Cardiac septum (tissue), 1 donor: ENCODE measurements at regions of chr2 and their contacts with region 1.

Region 1: DNA sequence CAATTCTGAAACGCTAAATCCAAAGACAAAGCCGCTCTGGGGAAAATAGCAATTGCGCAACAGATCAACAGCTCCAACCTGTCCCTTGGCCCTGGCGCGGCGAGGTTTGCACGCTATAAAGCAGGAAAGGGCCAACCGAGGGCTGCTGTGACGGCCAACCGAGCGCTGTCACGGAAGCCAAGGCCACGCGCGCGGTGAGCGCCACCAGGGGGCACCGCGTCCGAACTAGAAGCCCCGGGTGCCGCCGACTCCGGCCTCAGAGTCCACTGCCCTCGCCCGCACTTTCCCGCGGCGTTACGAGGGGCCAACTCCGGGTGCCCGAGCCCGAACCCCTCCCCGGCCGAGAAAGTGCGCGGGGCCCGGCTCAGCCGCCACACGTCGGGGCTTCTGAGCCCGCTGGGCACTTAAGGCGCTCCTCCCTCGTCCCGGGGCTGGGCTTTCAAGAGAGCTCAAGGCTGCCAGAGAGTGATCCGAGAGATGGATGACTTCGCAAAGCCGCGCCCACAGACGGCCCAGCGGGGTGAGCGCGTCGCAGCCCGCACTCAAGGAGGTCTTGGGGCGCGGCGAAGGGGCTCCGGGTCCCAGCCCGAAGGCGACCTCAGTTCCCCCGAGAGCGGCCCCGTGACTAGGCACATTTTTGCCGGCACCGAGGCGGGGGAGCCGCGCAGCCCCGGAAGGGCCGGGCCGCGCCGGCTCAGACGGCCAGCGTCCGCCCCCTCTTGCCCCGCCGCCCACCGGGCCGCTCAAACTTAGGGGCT is 897 bp downstream of the NFE2L2 start:
- DNase-seq: peak; percentile 99

Region 2: DNA sequence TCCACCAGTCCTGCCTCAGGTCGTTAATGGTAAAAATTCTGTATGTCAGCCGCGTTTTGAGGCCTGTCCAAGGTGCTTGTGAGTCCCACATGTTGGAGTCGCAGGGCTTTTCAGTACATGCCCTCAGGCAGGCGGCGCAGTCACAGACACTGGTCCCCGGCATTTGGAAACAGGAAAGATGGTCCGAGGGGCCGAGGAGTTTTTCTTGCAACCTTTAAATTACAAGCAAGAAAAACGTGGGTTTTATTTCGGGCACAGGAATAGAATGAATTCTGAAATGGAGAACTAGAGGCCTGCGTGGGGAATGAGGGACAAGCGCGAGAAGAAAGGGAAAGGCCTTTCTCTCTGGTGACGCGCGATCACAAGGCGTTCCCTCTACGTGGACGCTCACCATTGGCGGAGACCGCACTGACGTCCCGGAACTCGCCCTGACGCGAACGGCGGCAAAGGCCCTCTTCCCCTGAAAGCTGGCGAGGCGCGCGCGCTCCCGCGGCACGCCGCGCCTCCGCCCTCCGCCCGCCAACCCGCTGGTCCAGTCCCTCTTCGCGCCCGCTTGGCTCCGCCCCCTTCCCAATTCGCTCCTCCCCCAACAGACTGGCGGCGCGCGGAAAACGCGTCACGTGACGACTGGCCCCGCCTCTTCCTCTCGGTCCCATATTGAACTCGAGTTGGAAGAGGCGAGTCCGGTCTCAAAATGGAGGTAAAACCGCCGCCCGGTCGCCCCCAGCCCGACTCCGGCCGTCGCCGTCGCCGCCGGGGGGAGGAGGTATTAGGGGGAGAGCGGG is 51.3 kb before region 1 on chr2 and contains the start of gene HNRNPA3:
- intact Hi-C with region 1: loop called (anchors 1 kb)
- DNase-seq: peak; percentile 100
- total RNA-seq, gene HNRNPA3: 95.7 TPM

Region 3: GRCh38 chr2:177239932-177240630 is 23.5 kb before region 1 on chr2:
- intact Hi-C with region 1: loop called (anchors 1 kb)
- DNase-seq: no peak

Region 4: DNA sequence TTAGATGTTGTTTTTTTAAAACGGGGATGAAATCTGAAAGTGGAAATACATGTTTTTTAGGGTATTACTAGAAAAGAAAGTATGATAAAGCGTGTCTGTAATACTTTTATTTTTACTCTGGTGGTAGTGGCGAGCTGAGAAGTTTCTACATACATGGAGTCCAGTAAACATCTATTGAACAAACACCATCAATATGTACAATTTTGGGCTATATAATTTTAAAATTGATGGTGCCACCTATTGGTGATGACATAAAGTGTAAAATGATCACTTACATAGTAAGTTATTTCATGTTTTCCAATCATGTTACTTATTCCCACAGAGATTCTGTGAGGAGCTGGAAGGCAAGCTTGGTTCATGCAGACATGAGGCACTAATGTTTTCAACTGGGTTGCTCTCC is 32.4 kb after region 1 on chr2:
- intact Hi-C with region 1: loop called (anchors 2 kb)
- DNase-seq: no peak

Region 5: GRCh38 chr2:177433402-177433801 is 169.8 kb after region 1 on chr2:
- intact Hi-C with region 1: no loop called
- DNase-seq: no peak

Region 6: DNA sequence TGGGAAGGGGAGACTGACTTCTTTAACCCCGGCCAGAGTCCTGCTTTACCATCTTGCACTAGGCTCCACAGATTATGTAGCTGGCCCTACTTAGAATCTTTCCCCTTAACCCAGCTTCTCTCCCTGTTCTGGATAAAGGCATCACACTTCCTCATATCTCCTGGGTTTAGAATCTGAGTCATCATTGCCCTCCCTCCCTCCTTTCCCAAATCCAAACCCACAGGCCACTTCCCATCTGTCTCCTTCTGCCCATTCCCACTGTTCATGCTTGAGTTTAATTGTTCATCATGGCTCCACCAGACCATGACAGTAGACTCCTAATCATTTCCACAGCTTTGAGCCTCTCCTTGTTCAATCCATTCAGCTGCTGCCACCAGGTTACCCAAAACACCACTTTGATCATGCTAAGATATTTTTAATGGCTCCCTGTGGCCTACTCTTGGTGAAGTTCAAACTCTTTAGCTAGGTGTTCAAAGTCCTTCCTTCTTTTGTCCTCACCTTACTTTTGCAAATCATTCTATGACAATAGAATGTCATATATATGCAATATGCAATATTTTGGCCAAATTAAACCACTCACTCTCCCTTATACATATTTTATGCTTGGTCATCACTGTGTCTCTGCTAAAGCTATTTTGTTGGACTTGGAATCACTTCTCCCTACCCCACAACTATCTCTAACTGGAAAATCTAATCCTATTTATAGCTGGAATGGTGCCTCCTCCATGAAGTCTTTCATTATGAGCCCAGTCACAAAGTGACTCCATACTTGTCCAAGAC is 803.5 kb after region 1 on chr2:
- intact Hi-C with region 1: no loop called
- DNase-seq: no peak